ENCODE measurements at regions of chr13 and their contacts with region 1.

Region 1: GRCh38 chr13:39105110-39105509 is 66.9 kb downstream of the NHLRC3 start:
- DNase-seq: no peak
- CTCF ChIP-seq: no peak

Region 2: GRCh38 chr13:39091586-39091985 is 13.5 kb before region 1 on chr13:
- CTCF ChIA-PET with region 1: interaction called, 12 read pairs
- POLR2A ChIA-PET with region 1: no interaction called
- DNase-seq: no peak
- CTCF ChIP-seq: no peak

Region 3: GRCh38 chr13:39154041-39154440 is 48.9 kb after region 1 on chr13:
- CTCF ChIA-PET with region 1: no interaction called
- POLR2A ChIA-PET with region 1: no interaction called
- DNase-seq: no peak
- CTCF ChIP-seq: no peak

Region 4: DNA sequence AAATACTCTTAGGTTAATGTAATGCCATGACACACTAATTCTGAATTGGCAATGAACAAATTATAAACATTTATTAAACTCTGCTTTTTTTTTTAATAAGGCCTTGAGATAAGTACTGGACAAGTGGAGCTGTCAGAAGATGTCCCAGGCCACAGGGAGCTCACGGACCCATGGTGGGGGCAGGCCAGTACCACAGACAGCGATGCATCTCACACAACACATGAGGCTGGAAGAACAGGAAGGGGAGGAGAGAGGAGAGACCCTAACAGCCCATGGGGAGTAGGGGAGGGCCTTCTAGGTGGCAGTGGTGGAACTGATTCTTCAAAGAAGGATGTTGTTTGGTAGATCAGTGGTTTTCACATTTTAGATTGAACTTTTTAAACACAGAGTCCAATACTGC is 369.5 kb after region 1 on chr13:
- CTCF ChIA-PET with region 1: no interaction called
- POLR2A ChIA-PET with region 1: no interaction called
- DNase-seq: no peak
- CTCF ChIP-seq: no peak

Measured in GM10248 (cell line).